GM10248 (cell line): ENCODE measurements at regions of chr14 and their contacts with region 1.

Region 1: DNA sequence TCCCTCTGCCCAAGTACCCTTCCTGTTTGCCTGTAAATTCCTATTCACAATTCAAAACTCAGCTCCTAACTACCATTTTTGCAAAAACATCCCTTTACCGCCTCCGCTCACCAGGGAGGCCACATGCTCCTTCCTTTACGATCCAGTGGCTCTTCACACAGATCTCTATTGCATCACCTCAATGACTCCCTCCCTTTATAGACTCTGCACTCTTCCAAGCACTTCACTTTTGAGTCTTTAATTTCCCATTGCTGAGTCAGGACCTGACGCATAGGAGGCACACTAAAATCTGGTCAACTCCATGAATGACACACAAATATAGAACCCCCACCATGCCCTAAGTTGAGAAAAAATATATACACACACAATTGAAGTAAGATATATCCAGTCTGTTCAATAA is 45.9 kb downstream of the PPP1R13B start:
- DNase-seq: no peak
- CTCF ChIP-seq: no peak

Region 2: DNA sequence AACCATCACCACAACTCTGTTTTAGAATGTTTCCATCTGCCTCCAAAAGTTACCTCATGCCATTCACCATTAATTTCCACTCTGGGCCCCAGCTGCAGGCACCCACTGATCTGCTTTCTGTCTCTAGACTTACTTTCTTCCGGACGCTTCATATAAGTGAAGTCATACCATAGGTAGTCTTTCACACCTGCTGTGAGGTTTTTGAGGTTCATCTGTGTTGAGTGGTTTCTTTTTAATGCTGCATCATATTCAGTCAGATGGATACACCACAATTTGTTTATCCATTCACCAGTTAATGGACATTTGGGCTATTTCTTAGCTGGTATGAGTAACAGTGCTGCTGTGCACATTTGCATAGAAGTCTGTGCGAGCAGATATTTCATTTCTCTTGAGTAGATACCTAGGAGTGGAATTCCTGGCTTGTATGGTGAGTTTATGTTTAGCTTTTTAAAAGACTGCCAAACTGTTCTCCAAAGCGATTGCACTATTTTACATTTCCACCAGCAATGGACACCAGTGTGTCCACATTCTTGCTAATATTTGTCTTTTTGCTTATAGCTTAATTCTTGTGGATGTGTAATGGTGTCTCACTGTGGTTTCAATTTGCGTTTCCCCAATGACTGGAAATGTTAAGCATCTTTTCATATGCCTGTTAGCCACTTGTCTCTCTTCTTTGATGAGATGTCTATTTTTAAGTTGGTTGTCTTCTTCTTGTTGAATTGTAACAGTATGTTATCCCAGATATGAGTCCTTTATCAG is 37.5 kb before region 1 on chr14:
- CTCF ChIA-PET with region 1: no interaction called
- POLR2A ChIA-PET with region 1: no interaction called
- DNase-seq: peak; percentile 50
- CTCF ChIP-seq: no peak

Region 3: DNA sequence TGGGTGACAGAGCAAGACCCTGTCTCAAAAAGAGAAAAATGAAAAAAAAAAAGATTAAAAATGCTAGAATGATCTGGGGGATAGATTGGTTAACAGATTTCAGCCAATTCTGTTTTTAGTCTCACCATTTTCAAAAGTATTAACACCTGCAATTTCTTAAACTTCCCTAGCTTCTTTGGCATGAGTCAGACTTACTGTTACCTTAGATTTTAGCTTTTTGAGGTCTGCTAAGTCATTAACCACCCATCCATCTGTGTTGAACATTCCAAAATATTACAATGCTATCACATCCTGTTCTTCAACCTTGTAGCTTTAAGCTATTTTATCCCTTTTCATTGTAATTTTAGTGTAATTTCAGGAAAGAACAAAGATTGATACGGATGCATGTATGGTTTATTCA is 13.4 kb before region 1 on chr14:
- CTCF ChIA-PET with region 1: interaction called, 22 read pairs
- POLR2A ChIA-PET with region 1: no interaction called
- DNase-seq: no peak
- CTCF ChIP-seq: no peak

Region 4: GRCh38 chr14:104240434-104241157 is 439.1 kb after region 1 on chr14:
- CTCF ChIA-PET with region 1: no interaction called
- POLR2A ChIA-PET with region 1: no interaction called
- DNase-seq: no peak
- CTCF ChIP-seq: no peak